ENCODE measurements at regions of chr17 and their contacts with region 1.

Region 1: GRCh38 chr17:78186692-78187595 is at the starts of genes AFMID and TK1:
- DNase-seq: peak; percentile 97
- H3K4me3 Mint-ChIP-seq: peak within 1 kb of the TSS; percentile 95
- H3K27ac Mint-ChIP-seq: peak within 1 kb of the TSS; percentile 67
- H3K4me1 Mint-ChIP-seq: peaks cover 12% of the 10 kb centered on the region
- H3K27me3 Mint-ChIP-seq: no peaks in the 10 kb centered on the region
- CTCF ChIP-seq: peak; percentile 71
- total RNA-seq, gene AFMID: 18.7 and 22.2 TPM in 2 replicates
- total RNA-seq, gene TK1: 8.5 and 21.4 TPM in 2 replicates

Region 2: DNA sequence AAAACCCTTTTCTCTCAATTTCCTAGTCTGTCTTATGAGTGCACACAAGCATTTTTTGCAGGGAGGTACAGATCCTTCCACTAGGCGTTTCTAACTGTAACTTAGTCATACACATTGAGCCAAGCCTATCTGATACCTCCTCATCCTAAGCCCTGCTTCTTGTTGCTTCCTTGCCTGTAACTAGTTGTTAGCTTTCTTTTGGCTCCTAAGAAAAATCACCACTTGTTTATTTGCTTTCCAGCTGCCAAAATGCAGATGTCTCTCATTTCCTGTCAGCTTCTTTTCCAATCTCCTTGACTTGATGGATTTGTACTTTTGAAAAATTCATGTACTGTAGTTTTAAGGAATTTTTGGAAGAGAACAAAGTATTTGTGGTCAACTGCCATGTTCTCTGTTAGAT is 154.8 kb before region 1 on chr17:
- CTCF ChIA-PET with region 1: no interaction called
- POLR2A ChIA-PET with region 1: no interaction called
- intact Hi-C with region 1: no loop called
- DNase-seq: no peak
- H3K4me3 Mint-ChIP-seq: no peak overlapping the region
- H3K27ac Mint-ChIP-seq: no peak overlapping the region
- H3K4me1 Mint-ChIP-seq: peaks cover 6% of the 10 kb centered on the region
- H3K27me3 Mint-ChIP-seq: no peaks in the 10 kb centered on the region
- CTCF ChIP-seq: no peak

Region 3: GRCh38 chr17:78075545-78075944 is 111.4 kb before region 1 on chr17:
- CTCF ChIA-PET with region 1: no interaction called
- POLR2A ChIA-PET with region 1: no interaction called
- intact Hi-C with region 1: no loop called
- DNase-seq: no peak
- H3K4me3 Mint-ChIP-seq: no peak overlapping the region
- H3K27ac Mint-ChIP-seq: no peak overlapping the region
- H3K4me1 Mint-ChIP-seq: no peaks in the 10 kb centered on the region
- H3K27me3 Mint-ChIP-seq: no peaks in the 10 kb centered on the region
- CTCF ChIP-seq: no peak

Region 4: GRCh38 chr17:78112518-78113226 is 74.3 kb before region 1 on chr17:
- CTCF ChIA-PET with region 1: interaction called, 10 read pairs
- POLR2A ChIA-PET with region 1: no interaction called
- intact Hi-C with region 1: no loop called
- DNase-seq: peak; percentile 65
- H3K4me3 Mint-ChIP-seq: no peak overlapping the region
- H3K27ac Mint-ChIP-seq: no peak overlapping the region
- H3K4me1 Mint-ChIP-seq: peaks cover 5% of the 10 kb centered on the region
- H3K27me3 Mint-ChIP-seq: peaks cover 11% of the 10 kb centered on the region
- CTCF ChIP-seq: peak; percentile 99

Region 5: DNA sequence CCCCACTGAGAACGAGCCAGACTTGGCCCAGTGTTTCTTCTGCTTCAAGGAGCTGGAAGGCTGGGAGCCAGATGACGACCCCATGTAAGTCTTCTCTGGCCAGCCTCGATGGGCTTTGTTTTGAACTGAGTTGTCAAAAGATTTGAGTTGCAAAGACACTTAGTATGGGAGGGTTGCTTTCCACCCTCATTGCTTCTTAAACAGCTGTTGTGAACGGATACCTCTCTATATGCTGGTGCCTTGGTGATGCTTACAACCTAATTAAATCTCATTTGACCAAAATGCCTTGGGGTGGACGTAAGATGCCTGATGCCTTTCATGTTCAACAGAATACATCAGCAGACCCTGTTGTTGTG is 27.7 kb after region 1 on chr17:
- CTCF ChIA-PET with region 1: interaction called, 4 read pairs
- POLR2A ChIA-PET with region 1: interaction called, 4 read pairs
- intact Hi-C with region 1: loop called (anchors 1 kb)
- DNase-seq: no peak
- H3K4me3 Mint-ChIP-seq: peak overlapping the region; percentile 76
- H3K27ac Mint-ChIP-seq: no peak overlapping the region
- H3K4me1 Mint-ChIP-seq: no peaks in the 10 kb centered on the region
- H3K27me3 Mint-ChIP-seq: no peaks in the 10 kb centered on the region
- CTCF ChIP-seq: no peak

Region 6: DNA sequence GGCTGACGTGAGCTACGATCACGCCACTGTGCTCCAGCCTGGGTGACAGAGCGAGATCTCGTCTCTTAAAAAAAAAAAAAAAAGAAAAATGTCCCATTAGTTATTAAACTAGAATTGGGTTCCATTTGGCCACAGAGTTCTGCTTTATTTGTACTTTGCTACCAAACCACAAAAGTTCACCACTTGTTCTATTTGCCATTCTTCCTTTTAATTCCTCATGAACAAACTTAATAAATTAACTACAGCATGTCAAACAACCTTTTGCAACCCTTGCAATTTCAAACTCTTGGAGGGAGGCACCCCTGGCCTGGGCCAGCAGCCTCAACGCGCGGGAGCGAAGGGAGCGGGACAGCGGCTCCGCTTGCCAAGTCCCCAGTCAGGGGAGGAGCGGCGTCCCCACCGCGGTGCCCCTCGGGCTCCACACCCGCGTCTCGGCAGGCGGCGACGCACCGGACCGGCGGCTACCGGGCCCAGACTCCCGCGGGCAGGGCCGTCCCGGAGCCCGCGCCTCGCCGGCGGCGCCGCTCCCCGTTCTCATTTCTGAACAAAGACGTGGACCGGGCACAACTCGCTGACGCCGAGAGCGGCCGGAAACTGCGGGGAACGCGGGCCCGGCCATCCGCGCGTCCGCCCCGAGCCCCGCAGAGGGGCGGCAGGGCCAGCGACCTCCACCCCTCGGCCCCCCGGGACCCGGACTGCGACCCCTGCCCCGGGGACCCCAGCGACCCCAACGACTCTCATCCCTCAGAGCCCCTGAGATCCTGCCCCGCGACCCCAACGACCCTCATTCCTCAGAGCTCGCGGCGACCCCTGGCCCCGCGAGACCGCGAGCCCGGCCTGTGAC is 594.4 kb after region 1 on chr17:
- CTCF ChIA-PET with region 1: no interaction called
- POLR2A ChIA-PET with region 1: no interaction called
- intact Hi-C with region 1: no loop called
- DNase-seq: peak; percentile 38
- H3K4me3 Mint-ChIP-seq: peak overlapping the region; percentile 79
- H3K27ac Mint-ChIP-seq: no peak overlapping the region
- H3K4me1 Mint-ChIP-seq: peaks cover 13% of the 10 kb centered on the region
- H3K27me3 Mint-ChIP-seq: no peaks in the 10 kb centered on the region
- CTCF ChIP-seq: no peak

Measured in MCF 10A (cell line).